ENCODE measurements at regions of chr12 and their contacts with region 1.

Region 1: DNA sequence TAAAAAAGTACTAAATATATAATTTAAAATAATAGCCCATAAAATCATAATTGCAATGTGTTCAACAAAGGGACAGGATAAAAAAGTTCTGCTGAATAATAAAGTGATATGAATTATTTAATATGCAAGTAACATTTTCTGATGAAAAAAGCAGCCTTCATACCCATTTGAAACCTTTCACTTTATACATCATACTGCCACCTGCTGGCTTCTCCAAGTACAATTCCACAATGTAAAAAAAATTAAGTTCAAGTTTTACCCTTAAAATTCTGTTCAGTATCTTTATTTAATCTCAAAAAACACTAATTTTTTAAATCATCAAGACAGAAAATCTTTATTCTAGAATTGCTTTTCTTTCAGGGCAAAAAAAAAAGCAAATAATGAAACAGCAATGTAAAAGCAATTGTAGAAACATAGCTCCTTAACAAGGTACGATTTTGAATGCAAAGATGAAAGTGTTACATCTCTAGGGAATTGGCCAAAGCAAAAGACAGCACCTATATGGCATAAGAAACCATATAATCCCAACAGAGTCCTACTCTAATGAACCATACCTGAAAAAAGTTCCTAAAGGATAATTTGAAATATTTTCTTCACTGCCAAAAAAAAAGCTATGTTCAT is 15.0 kb downstream of the MDM1 start:
- DNase-seq: peak; percentile 68
- ATAC-seq: 0 out of 2 replicates have a peak, but pooled peaks have one; percentile 46
- H3K4me3 ChIP-seq: no peak overlapping the region
- H3K27ac ChIP-seq: no peak overlapping the region
- H3K4me1 ChIP-seq: no peaks in the 10 kb centered on the region
- H3K27me3 ChIP-seq: no peaks in the 10 kb centered on the region
- CTCF ChIP-seq: peak; percentile 74
- POLR2A ChIP-seq: no peak
- RAD21 ChIP-seq: peak; percentile 68

Region 2: GRCh38 chr12:67780580-67781084 is 536.5 kb before region 1 on chr12:
- CTCF ChIA-PET with region 1: interaction called, 10 read pairs
- POLR2A ChIA-PET with region 1: no interaction called
- dilution Hi-C with region 1: no loop called
- in situ Hi-C with region 1: no loop called
- intact Hi-C with region 1: no loop called
- DNase-seq: no peak
- ATAC-seq: no peak
- H3K4me3 ChIP-seq: no peak overlapping the region
- H3K27ac ChIP-seq: no peak overlapping the region
- H3K4me1 ChIP-seq: no peaks in the 10 kb centered on the region
- H3K27me3 ChIP-seq: peaks cover 3% of the 10 kb centered on the region; the same call in 1 of the 2 replicates
- CTCF ChIP-seq: no peak
- POLR2A ChIP-seq: no peak
- RAD21 ChIP-seq: no peak

Region 3: DNA sequence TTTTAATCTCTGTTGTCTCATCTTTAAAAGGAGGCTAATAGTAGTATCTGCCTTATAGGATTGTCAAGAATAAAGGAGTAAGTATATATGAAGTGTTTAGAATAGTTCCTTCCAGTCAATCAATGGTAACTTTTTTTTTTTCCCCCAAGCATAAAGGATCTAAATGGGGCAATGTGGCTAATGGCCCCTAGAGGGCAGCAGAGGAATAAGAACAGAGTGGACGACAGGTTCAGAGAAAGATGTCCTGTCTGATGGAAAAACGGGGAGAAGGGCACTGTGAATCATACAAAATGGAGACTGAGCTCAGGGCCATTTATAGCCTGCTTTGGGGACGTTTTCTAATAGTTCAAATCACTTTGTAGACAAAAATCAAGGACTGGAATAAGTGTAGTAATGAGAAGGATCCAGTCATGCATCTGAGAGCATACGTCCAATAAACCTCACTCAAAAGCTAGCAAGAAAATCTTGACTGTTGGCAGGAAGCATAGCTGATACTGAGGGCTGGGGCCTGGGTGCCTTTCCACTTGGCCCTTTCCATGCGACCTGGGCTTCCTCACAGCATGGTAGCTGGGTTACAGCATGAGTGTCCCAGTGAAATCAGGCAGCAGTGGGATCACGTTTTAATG is 276.6 kb before region 1 on chr12:
- CTCF ChIA-PET with region 1: interaction called, 7 read pairs
- POLR2A ChIA-PET with region 1: no interaction called
- dilution Hi-C with region 1: no loop called
- in situ Hi-C with region 1: loop called (anchors 10 kb)
- intact Hi-C with region 1: loop called (anchors 1 kb)
- DNase-seq: peak; percentile 73
- ATAC-seq: peak; percentile 95
- H3K4me3 ChIP-seq: no peak overlapping the region
- H3K27ac ChIP-seq: no peak overlapping the region
- H3K4me1 ChIP-seq: no peaks in the 10 kb centered on the region
- H3K27me3 ChIP-seq: no peaks in the 10 kb centered on the region; the same call in 1 of the 2 replicates
- CTCF ChIP-seq: peak; percentile 83
- POLR2A ChIP-seq: no peak
- RAD21 ChIP-seq: peak; percentile 79

Region 4: DNA sequence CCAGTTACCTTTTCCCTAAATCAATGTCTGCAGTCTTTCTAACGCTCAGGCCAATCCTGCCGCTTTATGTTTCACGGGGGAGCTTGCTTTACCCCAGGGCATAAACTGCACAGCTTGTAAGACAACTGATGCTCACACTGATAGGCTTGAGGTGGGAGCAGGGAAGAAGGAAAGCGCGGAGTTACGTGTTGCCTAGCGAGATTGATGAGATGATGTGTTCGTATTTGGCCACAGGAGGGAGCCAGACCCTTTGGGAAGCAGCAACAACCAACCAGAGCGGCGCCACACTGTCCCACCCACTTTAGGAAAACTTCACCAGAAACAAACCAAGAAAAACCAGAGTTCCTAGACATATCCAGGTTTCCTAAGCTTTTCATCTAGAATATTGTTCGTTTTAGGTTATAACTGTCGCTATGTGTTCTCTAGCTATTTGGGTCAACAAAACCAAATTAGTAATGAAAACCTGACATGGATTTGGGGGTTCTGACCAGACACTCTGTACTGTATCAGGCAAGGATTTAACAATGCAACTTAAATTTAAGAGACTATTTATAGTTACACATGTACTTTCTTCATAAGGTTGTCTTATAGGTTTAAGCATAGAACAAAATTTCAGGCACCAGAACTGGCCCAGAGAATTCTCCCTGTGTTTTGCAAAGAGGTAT is 93.9 kb before region 1 on chr12:
- CTCF ChIA-PET with region 1: interaction called, 25 read pairs
- POLR2A ChIA-PET with region 1: no interaction called
- dilution Hi-C with region 1: loop called (anchors 25 kb)
- in situ Hi-C with region 1: loop called (anchors 5 kb)
- intact Hi-C with region 1: loop called (anchors 1 kb)
- DNase-seq: peak; percentile 89
- ATAC-seq: peak; percentile 97
- H3K4me3 ChIP-seq: peak overlapping the region; percentile 17; the same call in 1 of the 2 replicates
- H3K27ac ChIP-seq: no peak overlapping the region
- H3K4me1 ChIP-seq: peaks cover 2% of the 10 kb centered on the region; the same call in 1 of the 2 replicates
- H3K27me3 ChIP-seq: no peaks in the 10 kb centered on the region
- CTCF ChIP-seq: peak; percentile 95
- POLR2A ChIP-seq: 0 out of 2 replicates have a peak, but pooled peaks have one; percentile 46
- RAD21 ChIP-seq: peak; percentile 99

Region 5: GRCh38 chr12:68236421-68237059 is 80.6 kb before region 1 on chr12:
- CTCF ChIA-PET with region 1: no interaction called
- POLR2A ChIA-PET with region 1: no interaction called
- dilution Hi-C with region 1: no loop called
- in situ Hi-C with region 1: no loop called
- intact Hi-C with region 1: loop called (anchors 1 kb)
- DNase-seq: no peak
- ATAC-seq: no peak
- H3K4me3 ChIP-seq: no peak overlapping the region
- H3K27ac ChIP-seq: no peak overlapping the region
- H3K4me1 ChIP-seq: peaks cover 8% of the 10 kb centered on the region
- H3K27me3 ChIP-seq: peaks cover 6% of the 10 kb centered on the region; the same call in 1 of the 2 replicates
- CTCF ChIP-seq: no peak
- POLR2A ChIP-seq: no peak
- RAD21 ChIP-seq: no peak

Measured in IMR-90 (cell line).